Heart left ventricle (tissue), 16 donors: ENCODE measurements at regions of chr1 and their contacts with region 1.

Region 1: GRCh38 chr1:29542548-29542947 is 306.2 kb downstream of the PTPRU start:
- DNase-seq: peak in 1 of 5 donors; percentile 17
- ATAC-seq: no peak
- H3K4me3 ChIP-seq: no peak overlapping the region
- H3K27ac ChIP-seq: no peak overlapping the region
- H3K4me1 ChIP-seq: no peaks in the 10 kb centered on the region
- H3K27me3 ChIP-seq: peaks cover 0 to 2% (median 0%) of the 10 kb centered on the region in 9 donors
- CTCF ChIP-seq: no peak
- POLR2A ChIP-seq: no peak

Region 2: GRCh38 chr1:29062157-29062942 is 480.2 kb before region 1 on chr1:
- intact Hi-C with region 1: no loop called
- DNase-seq: no peak
- ATAC-seq: no peak
- H3K4me3 ChIP-seq: no peak overlapping the region
- H3K27ac ChIP-seq: no peak overlapping the region
- H3K4me1 ChIP-seq: peaks cover 0 to 8% (median 0%) of the 10 kb centered on the region in 12 donors
- H3K27me3 ChIP-seq: no peaks in the 10 kb centered on the region
- CTCF ChIP-seq: no peak
- POLR2A ChIP-seq: no peak

Region 3: DNA sequence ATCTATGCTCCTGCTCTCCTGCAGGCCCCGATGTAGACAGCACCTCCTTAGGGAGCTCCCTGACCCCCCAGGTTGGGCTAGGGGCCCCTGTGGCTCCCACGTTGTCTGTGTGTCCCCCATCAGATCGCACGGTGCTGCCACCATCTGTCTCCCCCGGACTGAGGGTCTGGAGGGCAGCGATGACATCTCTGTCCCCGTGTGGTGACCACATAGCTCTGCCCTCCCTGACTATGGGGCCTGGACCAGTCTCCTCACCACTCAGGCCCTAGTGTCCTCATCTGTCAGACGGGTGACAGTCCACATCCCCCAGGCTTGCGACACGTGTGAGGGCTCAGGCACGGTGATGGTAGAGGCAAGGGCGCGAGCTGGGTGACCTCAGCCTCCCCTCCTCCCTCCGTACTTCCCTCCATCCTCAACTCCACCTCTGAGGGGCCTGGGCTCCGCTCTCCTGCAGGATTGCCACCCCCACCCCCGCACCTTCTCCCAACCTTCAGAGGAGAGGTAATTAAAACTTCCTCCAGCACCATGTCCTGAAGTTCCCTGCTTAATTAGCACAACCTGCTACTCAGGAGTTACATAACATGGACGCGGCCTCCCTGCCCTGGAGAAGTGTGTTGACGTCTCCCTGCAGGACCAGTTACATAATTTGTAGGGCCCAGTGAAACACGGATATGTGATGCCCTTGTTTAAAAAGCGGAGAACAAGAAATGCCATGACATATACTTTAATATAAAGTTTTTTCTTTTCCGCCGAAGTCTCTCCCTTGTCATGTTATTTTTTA is 18.1 kb before region 1 on chr1:
- intact Hi-C with region 1: loop called in 1 of 10 experiments (anchors 2 kb)
- DNase-seq: no peak
- ATAC-seq: no peak
- H3K4me3 ChIP-seq: no peak overlapping the region
- H3K27ac ChIP-seq: no peak overlapping the region
- H3K4me1 ChIP-seq: no peaks in the 10 kb centered on the region
- H3K27me3 ChIP-seq: peaks cover 0 to 50% (median 10%) of the 10 kb centered on the region in 9 donors
- CTCF ChIP-seq: no peak
- POLR2A ChIP-seq: no peak

Region 4: DNA sequence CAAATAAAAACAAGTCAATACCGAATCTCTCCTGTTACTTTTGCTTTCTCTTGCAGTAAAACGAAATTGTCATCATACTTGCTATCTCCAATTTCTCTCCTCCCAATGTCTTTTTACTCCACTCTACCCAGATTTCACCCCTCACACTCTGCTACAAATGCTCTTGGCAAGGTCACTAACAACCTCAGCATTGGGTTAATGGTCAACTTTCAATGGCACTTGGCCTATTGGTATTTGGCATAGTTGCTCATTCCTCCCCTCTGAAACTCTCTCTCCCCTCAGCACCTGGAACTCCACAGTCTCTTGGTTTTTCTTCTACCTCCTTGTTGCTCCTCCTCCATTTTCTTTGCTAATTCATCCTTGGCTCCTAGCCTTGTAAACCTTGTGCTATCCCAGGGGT is 61.1 kb after region 1 on chr1:
- intact Hi-C with region 1: loop called in 1 of 10 experiments (anchors 10 kb)
- DNase-seq: no peak
- ATAC-seq: no peak
- H3K4me3 ChIP-seq: no peak overlapping the region
- H3K27ac ChIP-seq: no peak overlapping the region
- H3K4me1 ChIP-seq: no peaks in the 10 kb centered on the region
- H3K27me3 ChIP-seq: peaks cover 0 to 11% (median 0%) of the 10 kb centered on the region in 9 donors
- CTCF ChIP-seq: no peak
- POLR2A ChIP-seq: no peak